MCF 10A (cell line): ENCODE measurements at regions of chr7 and their contacts with region 1.

Region 1: GRCh38 chr7:137656227-137656849 is 190.4 kb downstream of the DGKI start:
- DNase-seq: peak; percentile 77
- H3K4me3 Mint-ChIP-seq: no peak overlapping the region
- H3K27ac Mint-ChIP-seq: no peak overlapping the region
- H3K4me1 Mint-ChIP-seq: no peaks in the 10 kb centered on the region
- H3K27me3 Mint-ChIP-seq: no peaks in the 10 kb centered on the region
- CTCF ChIP-seq: peak; percentile 82

Region 2: DNA sequence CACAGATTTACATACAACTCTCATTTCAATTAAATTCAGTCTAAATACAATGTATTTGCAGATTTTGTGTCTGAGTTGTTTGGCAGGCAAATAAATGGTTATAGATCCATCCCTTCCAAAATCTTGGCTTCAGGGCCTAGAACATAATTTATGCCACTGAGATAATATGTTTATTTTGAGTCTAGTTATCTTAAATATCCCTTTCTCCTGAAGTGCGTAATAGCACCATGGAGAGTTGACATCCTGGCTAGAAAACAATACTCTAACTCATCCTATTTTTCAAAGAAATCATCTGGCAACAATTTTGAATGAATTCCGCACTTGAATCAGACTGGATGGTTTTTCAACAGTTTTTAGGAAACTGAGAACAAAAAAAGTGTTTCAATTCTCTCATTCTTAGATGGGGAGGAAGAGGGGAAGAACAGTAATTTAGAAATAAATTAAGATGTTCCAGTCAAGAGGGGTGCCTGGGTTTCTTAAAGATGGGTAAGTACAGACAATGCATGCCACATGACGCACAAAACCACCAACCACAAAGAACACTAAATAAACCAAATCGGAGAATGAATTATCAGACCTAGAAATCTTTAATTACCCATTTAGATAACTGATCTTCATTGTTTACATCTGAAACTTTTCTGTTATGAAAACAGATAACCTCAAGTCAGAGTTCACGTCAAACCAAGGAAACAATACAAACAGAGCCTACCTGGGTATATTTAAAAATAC is 84.1 kb before region 1 on chr7:
- CTCF ChIA-PET with region 1: no interaction called
- POLR2A ChIA-PET with region 1: no interaction called
- intact Hi-C with region 1: no loop called
- DNase-seq: no peak
- H3K4me3 Mint-ChIP-seq: no peak overlapping the region
- H3K27ac Mint-ChIP-seq: no peak overlapping the region
- H3K4me1 Mint-ChIP-seq: no peaks in the 10 kb centered on the region
- H3K27me3 Mint-ChIP-seq: no peaks in the 10 kb centered on the region
- CTCF ChIP-seq: no peak

Region 3: DNA sequence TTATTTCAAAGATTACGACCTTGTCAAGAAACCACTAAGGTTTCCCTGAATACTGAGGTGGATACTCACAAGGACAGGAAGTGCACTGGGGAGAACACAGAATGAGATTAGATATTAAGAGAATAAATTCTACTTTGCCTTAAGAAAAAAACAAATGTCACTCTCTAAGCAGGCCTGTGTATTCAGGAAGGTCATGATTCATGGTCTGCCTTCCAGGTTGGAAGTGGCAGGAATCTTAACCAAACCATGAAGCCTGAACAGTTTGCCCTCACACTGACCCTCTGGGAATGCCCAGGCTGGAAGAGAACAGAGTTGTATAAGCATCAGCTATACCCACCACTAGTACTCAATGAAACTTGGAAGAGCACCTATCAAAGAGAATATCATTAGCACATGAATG is 37.2 kb before region 1 on chr7:
- CTCF ChIA-PET with region 1: interaction called, 15 read pairs
- POLR2A ChIA-PET with region 1: no interaction called
- intact Hi-C with region 1: no loop called
- DNase-seq: no peak
- H3K4me3 Mint-ChIP-seq: no peak overlapping the region
- H3K27ac Mint-ChIP-seq: no peak overlapping the region
- H3K4me1 Mint-ChIP-seq: no peaks in the 10 kb centered on the region
- H3K27me3 Mint-ChIP-seq: peaks cover 14% of the 10 kb centered on the region
- CTCF ChIP-seq: no peak

Region 4: GRCh38 chr7:137670199-137671071 is 14.1 kb after region 1 on chr7:
- CTCF ChIA-PET with region 1: interaction called, 102 read pairs
- POLR2A ChIA-PET with region 1: interaction called, 4 read pairs
- intact Hi-C with region 1: no loop called
- DNase-seq: peak; percentile 90
- H3K4me3 Mint-ChIP-seq: no peak overlapping the region
- H3K27ac Mint-ChIP-seq: peak overlapping the region; percentile 33
- H3K4me1 Mint-ChIP-seq: peaks cover 41% of the 10 kb centered on the region
- H3K27me3 Mint-ChIP-seq: no peaks in the 10 kb centered on the region
- CTCF ChIP-seq: no peak

Region 5: GRCh38 chr7:137687556-137688280 is 31.4 kb after region 1 on chr7:
- CTCF ChIA-PET with region 1: no interaction called
- POLR2A ChIA-PET with region 1: no interaction called
- intact Hi-C with region 1: no loop called
- DNase-seq: no peak
- H3K4me3 Mint-ChIP-seq: no peak overlapping the region
- H3K27ac Mint-ChIP-seq: peak overlapping the region; percentile 32
- H3K4me1 Mint-ChIP-seq: peaks cover 28% of the 10 kb centered on the region
- H3K27me3 Mint-ChIP-seq: no peaks in the 10 kb centered on the region
- CTCF ChIP-seq: no peak

Region 6: DNA sequence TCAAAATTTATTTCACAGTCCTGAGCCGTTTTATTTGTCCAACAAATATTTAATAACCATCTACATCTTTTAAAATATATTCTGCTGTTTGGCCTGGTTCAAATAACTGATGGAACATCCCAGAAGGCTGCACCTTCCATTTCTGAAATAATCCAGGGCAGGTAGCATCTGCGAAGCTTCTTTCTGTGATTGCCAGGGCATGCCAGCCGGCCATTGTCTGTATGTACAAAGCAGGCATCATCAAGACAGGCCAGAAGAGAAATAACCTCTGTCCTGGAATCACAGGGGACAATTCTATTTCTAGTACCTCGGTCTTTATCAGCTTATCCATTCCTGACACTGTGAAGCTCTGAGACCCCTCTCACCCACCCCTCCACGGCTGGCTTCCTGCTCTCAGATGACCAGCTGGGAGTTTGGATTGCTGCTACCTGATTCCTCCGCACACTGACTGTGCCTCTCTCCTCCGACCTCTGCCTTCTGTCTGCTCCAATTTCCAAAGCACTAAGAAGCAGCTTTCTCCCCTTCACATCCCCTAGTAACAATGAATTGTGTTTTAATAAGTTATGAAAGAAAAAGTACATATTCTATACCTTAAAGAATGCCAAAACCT is 182.5 kb after region 1 on chr7:
- CTCF ChIA-PET with region 1: interaction called, 16 read pairs
- POLR2A ChIA-PET with region 1: no interaction called
- intact Hi-C with region 1: no loop called
- DNase-seq: no peak
- H3K4me3 Mint-ChIP-seq: no peak overlapping the region
- H3K27ac Mint-ChIP-seq: no peak overlapping the region
- H3K4me1 Mint-ChIP-seq: no peaks in the 10 kb centered on the region
- H3K27me3 Mint-ChIP-seq: no peaks in the 10 kb centered on the region
- CTCF ChIP-seq: no peak

Region 7: DNA sequence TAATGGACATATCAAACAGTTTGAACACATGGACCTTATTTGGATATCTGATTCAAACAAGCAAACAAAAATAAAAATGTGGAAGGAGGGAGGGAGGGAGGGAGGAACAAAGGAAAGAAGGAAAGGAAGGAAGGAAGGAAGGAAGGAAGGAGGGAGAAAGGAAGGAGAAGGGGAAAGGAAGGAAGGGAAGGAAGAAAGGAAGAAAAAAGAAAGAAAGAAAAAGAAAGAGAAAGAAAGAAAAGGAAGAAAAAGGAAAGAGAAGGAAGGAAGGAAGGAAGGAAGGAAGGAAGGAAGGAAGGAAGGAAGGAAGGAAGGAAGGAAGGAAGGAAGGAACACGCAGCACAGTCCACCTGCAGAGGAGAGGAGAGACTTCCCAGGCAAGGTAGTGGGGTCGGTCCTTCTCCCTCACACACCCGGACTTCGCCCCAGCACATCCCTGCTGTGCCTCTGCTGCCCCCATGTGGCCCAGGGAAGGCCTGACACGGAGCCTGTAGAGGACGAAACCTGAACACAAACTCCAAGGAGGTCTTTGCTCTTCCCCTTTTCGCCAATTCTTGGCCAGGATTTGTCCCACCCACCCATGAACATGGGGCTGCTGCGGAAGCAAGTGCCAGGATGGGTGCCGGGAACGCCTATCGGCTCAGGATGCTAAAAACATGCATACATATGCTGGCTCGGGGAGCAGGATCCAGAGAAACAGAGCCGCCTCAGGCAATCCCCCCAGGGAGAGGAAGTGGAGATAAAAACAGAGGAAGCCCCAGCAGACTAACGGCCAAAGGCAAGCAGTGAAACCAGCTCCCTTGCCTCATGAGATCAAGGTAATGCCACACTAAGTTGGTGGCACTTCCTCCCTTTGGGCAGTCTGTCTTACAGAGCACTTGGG is 242.7 kb after region 1 on chr7:
- CTCF ChIA-PET with region 1: interaction called, 254 read pairs
- POLR2A ChIA-PET with region 1: no interaction called
- intact Hi-C with region 1: loop called (anchors 1 kb)
- DNase-seq: peak; percentile 76
- H3K4me3 Mint-ChIP-seq: no peak overlapping the region
- H3K27ac Mint-ChIP-seq: peak overlapping the region; percentile 81
- H3K4me1 Mint-ChIP-seq: peaks cover 10% of the 10 kb centered on the region
- H3K27me3 Mint-ChIP-seq: no peaks in the 10 kb centered on the region
- CTCF ChIP-seq: peak; percentile 92

Region 8: GRCh38 chr7:138008547-138009349 is 352.4 kb after region 1 on chr7:
- CTCF ChIA-PET with region 1: interaction called, 32 read pairs
- POLR2A ChIA-PET with region 1: interaction called, 5 read pairs
- intact Hi-C with region 1: loop called (anchors 1 kb)
- DNase-seq: peak; percentile 78
- H3K4me3 Mint-ChIP-seq: no peak overlapping the region
- H3K27ac Mint-ChIP-seq: no peak overlapping the region
- H3K4me1 Mint-ChIP-seq: no peaks in the 10 kb centered on the region
- H3K27me3 Mint-ChIP-seq: no peaks in the 10 kb centered on the region
- CTCF ChIP-seq: peak; percentile 90